Activated CD4-positive, alpha-beta T cell treated with anti-CD3 and anti-CD28 coated beads for 36 hours (primary cell): ENCODE measurements at regions of chr6 and their contacts with region 1.

Region 1: GRCh38 chr6:73520688-73521350 is at the start of gene EEF1A1:
- DNase-seq: peak; percentile 100
- ATAC-seq: peak; percentile 80
- H3K4me3 Mint-ChIP-seq: peak within 1 kb of the TSS; percentile 97
- H3K27ac Mint-ChIP-seq: peak within 1 kb of the TSS; percentile 98
- H3K4me1 Mint-ChIP-seq: peaks cover 25% of the 10 kb centered on the region
- H3K27me3 Mint-ChIP-seq: no peaks in the 10 kb centered on the region
- total RNA-seq, gene EEF1A1: 11,209 to 15,482 TPM

Region 2: DNA sequence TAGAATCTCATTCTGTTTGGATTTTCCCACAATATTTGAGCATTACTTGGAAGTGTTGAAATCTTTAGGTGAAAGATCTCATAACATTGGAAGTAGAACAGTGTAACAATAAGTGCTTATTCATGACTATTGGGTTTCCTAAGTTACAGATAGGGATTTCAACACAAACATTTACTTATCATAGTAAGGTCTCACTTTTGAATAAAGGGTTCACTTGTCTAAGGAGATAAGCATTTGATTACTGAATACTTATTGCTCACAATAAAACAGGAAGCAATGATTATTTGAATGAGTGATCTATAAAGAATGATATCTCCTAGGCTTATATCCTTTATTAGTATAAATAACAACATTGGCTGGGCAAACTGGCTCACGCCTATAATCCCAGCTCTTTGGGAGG is 111.4 kb before region 1 on chr6:
- CTCF ChIA-PET with region 1: no interaction called
- POLR2A ChIA-PET with region 1: no interaction called
- intact Hi-C with region 1: no loop called
- DNase-seq: no peak
- ATAC-seq: no peak
- H3K4me3 Mint-ChIP-seq: no peak overlapping the region
- H3K27ac Mint-ChIP-seq: no peak overlapping the region
- H3K4me1 Mint-ChIP-seq: no peaks in the 10 kb centered on the region
- H3K27me3 Mint-ChIP-seq: no peaks in the 10 kb centered on the region

Region 3: GRCh38 chr6:73443555-73443954 is 77.3 kb before region 1 on chr6:
- CTCF ChIA-PET with region 1: no interaction called
- POLR2A ChIA-PET with region 1: no interaction called
- intact Hi-C with region 1: no loop called
- DNase-seq: no peak
- ATAC-seq: no peak
- H3K4me3 Mint-ChIP-seq: no peak overlapping the region
- H3K27ac Mint-ChIP-seq: no peak overlapping the region
- H3K4me1 Mint-ChIP-seq: peaks cover 29% of the 10 kb centered on the region
- H3K27me3 Mint-ChIP-seq: no peaks in the 10 kb centered on the region

Region 4: GRCh38 chr6:73461537-73462350 is 59.1 kb before region 1 on chr6 and contains the start of gene MTO1:
- CTCF ChIA-PET with region 1: interaction called, 7 read pairs
- POLR2A ChIA-PET with region 1: interaction called, 39 read pairs
- intact Hi-C with region 1: loop called (anchors 1 to 2 kb)
- DNase-seq: peak; percentile 92
- ATAC-seq: peak; percentile 96
- H3K4me3 Mint-ChIP-seq: peak within 1 kb of the TSS; percentile 93
- H3K27ac Mint-ChIP-seq: peak within 1 kb of the TSS; percentile 100
- H3K4me1 Mint-ChIP-seq: peaks cover 37% of the 10 kb centered on the region
- H3K27me3 Mint-ChIP-seq: no peaks in the 10 kb centered on the region
- total RNA-seq, gene MTO1: 45.0 to 49.7 TPM

Region 5: DNA sequence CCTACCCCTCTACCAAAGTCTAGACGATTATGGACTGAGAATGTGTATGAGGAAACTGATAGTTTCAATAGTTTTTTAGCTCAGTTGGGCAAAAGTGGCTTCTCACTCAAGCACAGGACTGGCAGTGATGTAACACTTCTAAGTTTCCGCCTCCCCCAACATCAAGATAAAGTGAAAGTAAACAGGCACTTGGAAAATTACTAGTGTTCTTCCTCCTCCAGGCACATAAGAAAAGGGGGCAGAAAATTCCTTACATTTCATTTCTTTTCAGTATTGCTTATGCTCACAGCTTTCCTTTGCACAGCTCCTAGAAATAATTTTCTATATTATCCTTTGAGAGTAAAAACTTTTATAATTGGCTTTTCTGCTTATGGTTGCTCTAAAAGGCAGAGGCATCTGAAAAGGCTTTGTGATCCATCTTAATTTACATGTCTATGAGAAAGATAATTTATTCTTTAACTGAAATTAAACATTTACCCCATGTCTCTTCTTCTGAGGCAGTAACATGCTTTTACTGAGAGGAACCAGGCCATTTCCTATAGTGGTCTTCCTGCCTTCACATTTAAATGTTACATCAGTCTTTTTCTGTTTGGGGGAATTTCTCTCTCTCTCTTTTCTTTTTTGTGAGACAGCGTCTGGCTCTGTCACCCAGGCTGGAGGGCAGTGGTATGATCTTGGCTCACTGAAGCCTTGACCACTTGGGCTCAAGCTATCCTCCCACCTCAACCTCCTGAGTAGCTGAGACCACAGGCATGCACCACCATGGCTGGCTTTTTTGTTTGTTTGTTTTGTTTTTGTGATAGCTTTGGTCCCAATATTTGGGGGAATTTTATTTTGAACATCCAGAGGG is 65.0 kb after region 1 on chr6:
- CTCF ChIA-PET with region 1: interaction called, 10 read pairs
- POLR2A ChIA-PET with region 1: interaction called, 28 read pairs
- intact Hi-C with region 1: loop called (anchors 1 kb)
- DNase-seq: peak; percentile 55
- ATAC-seq: peak; percentile 79
- H3K4me3 Mint-ChIP-seq: peak overlapping the region; percentile 73
- H3K27ac Mint-ChIP-seq: peak overlapping the region; percentile 99
- H3K4me1 Mint-ChIP-seq: peaks cover 18% of the 10 kb centered on the region
- H3K27me3 Mint-ChIP-seq: no peaks in the 10 kb centered on the region

Region 6: GRCh38 chr6:73695619-73696421 is 175.0 kb after region 1 on chr6 and contains the start of gene CD109:
- CTCF ChIA-PET with region 1: interaction called, 4 read pairs
- POLR2A ChIA-PET with region 1: interaction called, 3 read pairs
- intact Hi-C with region 1: loop called (anchors 1 kb)
- DNase-seq: peak; percentile 88
- ATAC-seq: peak; percentile 86
- H3K4me3 Mint-ChIP-seq: peak within 1 kb of the TSS; percentile 81
- H3K27ac Mint-ChIP-seq: peak within 1 kb of the TSS; percentile 96
- H3K4me1 Mint-ChIP-seq: peaks cover 44% of the 10 kb centered on the region
- H3K27me3 Mint-ChIP-seq: peaks cover 8% of the 10 kb centered on the region
- total RNA-seq, gene CD109: 13.2 to 15.8 TPM

Region 7: GRCh38 chr6:73752943-73753342 is 232.1 kb after region 1 on chr6:
- CTCF ChIA-PET with region 1: no interaction called
- POLR2A ChIA-PET with region 1: no interaction called
- intact Hi-C with region 1: no loop called
- DNase-seq: no peak
- ATAC-seq: no peak
- H3K4me3 Mint-ChIP-seq: no peak overlapping the region
- H3K27ac Mint-ChIP-seq: no peak overlapping the region
- H3K4me1 Mint-ChIP-seq: no peaks in the 10 kb centered on the region
- H3K27me3 Mint-ChIP-seq: no peaks in the 10 kb centered on the region

Region 8: DNA sequence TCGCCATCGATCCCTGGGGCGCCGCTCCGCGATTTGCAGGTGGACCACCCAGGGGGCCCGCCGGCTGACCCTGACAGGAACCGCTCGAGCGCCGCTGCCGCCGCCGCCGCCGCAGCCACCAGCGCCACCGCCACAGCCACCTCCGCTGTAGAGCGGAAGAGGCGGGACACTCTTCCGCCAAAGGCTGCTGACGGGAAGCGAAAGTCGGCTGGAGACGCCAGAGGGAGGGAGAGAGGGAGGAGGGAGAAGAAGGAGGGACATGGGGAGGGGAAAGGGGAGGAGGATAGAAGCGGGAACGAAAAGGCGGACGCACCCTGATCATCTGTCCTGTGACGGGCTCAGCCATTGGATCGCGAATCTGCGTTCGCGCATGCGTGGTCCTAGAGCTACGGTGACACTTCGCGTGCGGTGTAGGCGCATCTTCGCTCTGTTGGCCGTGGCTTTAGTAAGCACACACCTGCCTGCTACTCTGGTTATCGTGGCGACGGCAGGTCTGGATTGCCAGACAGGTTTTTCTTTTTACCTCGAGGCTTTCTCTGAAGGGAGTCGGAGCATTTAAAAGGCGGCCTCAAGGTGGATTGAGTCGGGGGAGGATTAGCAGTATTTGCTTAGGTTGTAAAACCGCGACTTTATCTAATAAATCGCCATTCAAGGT is 1763.9 kb after region 1 on chr6 and contains the start of gene TMEM30A:
- CTCF ChIA-PET with region 1: no interaction called
- POLR2A ChIA-PET with region 1: no interaction called
- intact Hi-C with region 1: loop called in 1 of 2 experiments (anchors 1 kb)
- DNase-seq: peak; percentile 98
- ATAC-seq: peak; percentile 97
- H3K4me3 Mint-ChIP-seq: no peak within 1 kb of the TSS
- H3K27ac Mint-ChIP-seq: no peak within 1 kb of the TSS
- H3K4me1 Mint-ChIP-seq: peaks cover 48% of the 10 kb centered on the region
- H3K27me3 Mint-ChIP-seq: no peaks in the 10 kb centered on the region
- total RNA-seq, gene TMEM30A: 23.4 to 44.3 TPM